GM13977 (cell line): ENCODE measurements at regions of chr5 and their contacts with region 1.

Region 1: GRCh38 chr5:95858661-95859326 is 36.3 kb upstream of the GLRX start:
- DNase-seq: peak; percentile 89
- CTCF ChIP-seq: peak; percentile 96

Region 2: GRCh38 chr5:96336351-96336985 is 477.7 kb after region 1 on chr5:
- in situ Hi-C with region 1: loop called (anchors 10 kb)
- DNase-seq: peak; percentile 31
- CTCF ChIP-seq: peak; percentile 76

Region 3: GRCh38 chr5:96434201-96434645 is 575.4 kb after region 1 on chr5:
- in situ Hi-C with region 1: loop called (anchors 25 kb)
- DNase-seq: peak; percentile 28
- CTCF ChIP-seq: no peak

Region 4: DNA sequence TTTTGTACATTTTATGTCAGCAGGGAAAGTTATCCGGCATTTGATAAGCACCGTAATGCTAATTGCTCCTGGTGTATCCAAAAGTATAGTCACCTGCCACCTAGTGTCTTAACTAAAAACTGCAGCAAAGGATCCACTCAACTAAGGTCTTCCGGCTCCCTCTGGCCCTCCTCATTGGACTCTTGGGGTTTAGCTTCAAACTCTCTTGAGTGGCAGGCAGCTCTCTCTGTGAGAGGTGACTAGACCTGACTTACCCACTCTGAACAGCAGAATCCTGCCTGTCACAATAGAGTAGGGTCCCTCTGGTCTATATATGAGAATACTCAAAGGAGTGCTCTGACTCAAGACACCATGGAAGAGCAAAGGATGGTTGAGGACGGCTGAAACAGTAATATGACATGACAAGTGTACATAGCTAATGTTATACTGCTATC is 743.0 kb after region 1 on chr5:
- in situ Hi-C with region 1: loop called (anchors 10 kb)
- DNase-seq: peak; percentile 67
- CTCF ChIP-seq: peak; percentile 69